Endothelial cell of umbilical vein (primary cell): ENCODE measurements at regions of chr14 and their contacts with region 1.

Region 1: DNA sequence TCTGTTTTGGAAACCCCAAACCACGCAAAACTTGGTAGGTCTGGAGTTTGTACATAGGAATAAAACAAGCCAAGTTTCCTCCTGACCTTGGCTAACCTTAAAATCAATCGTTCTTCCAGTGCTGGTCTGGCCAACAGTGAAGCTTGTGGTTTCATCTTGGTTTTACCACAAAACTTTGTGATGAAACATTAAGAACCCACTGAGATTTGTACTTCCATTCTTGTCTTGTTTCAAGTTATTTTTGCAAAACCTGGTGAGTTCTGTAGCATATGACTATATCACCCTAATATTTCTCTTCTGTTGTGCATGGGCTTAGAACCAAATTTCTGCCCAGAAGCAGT is 26.4 kb downstream of the SIX1 start:
- DNase-seq: no peak
- H3K4me3 ChIP-seq: no peak overlapping the region
- H3K27ac ChIP-seq: no peak overlapping the region
- H3K4me1 ChIP-seq: peaks cover 10% of the 10 kb centered on the region
- H3K27me3 ChIP-seq: peaks cover 0 to 2% of the 10 kb centered on the region in 2 experiments
- CTCF ChIP-seq: no peak
- POLR2A ChIP-seq: no peak

Region 2: GRCh38 chr14:60724137-60724619 is 101.3 kb after region 1 on chr14 and contains the start of gene SIX4:
- CTCF ChIA-PET with region 1: interaction called, 14 read pairs
- POLR2A ChIA-PET with region 1: interaction called, 4 read pairs
- dilution Hi-C with region 1: no loop called
- intact Hi-C with region 1: loop called (anchors 2 kb)
- DNase-seq: peak; percentile 85
- H3K4me3 ChIP-seq: peak within 1 kb of the TSS; percentile 81 to 94 (median 86)
- H3K27ac ChIP-seq: peak within 1 kb of the TSS; percentile 57
- H3K4me1 ChIP-seq: peaks cover 8% of the 10 kb centered on the region
- H3K27me3 ChIP-seq: peaks cover 9 to 16% of the 10 kb centered on the region in 2 experiments
- CTCF ChIP-seq: no peak
- POLR2A ChIP-seq: peak; percentile 75
- total RNA-seq, gene SIX4: 4.7 and 7.5 TPM in 2 replicates

Region 3: GRCh38 chr14:60753264-60754119 is 130.6 kb after region 1 on chr14:
- CTCF ChIA-PET with region 1: no interaction called
- POLR2A ChIA-PET with region 1: no interaction called
- dilution Hi-C with region 1: no loop called
- intact Hi-C with region 1: no loop called
- DNase-seq: no peak
- H3K4me3 ChIP-seq: no peak overlapping the region
- H3K27ac ChIP-seq: no peak overlapping the region
- H3K4me1 ChIP-seq: peaks cover 18% of the 10 kb centered on the region
- H3K27me3 ChIP-seq: no peaks in the 10 kb centered on the region
- CTCF ChIP-seq: no peak
- POLR2A ChIP-seq: no peak

Region 4: DNA sequence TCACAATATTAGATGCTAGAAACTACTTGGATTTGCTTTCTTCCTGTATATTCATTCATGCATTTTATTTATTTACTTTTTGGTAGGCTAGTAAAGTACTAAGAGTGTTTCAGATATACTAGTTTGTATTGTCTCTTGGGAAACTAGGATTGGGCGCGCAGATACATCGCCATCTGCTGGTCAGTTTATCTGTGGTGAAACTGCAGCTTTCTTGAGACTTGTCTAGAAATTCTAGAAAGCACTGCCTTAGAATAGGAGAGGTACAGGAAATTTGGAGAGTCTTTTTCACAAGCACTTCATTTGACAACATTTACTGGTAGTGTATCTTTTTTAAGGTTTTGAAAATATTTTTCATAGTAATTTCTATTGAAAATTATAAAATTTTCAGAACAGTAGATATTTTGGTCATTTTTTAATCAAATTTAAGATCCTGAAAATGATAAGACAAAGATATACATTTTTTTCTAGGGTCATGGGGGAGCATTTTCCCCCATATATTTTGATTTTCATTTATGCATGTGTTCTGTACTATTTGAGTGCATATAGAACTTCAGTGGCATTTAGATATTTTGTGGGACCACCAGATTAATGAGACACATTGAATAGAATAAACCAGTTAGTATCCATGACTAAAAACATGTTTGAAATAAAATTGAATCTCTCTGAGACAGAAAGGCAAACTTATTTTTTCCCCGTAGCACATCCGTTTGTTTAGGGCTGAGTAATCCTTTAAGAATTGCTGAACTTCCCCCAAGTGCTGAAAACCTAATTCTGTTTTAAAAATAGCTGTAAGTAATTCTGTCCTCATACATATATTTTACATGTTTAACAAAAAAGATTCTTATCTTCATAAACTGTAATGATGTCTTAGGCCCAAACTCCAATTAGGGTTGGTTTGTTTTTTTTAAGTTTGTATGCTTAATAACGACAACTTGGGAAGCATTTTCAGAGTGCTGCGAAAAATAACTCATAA is 402.6 kb after region 1 on chr14:
- CTCF ChIA-PET with region 1: interaction called, 25 read pairs
- POLR2A ChIA-PET with region 1: no interaction called
- dilution Hi-C with region 1: loop called (anchors 25 kb)
- intact Hi-C with region 1: loop called (anchors 1 kb)
- DNase-seq: peak; percentile 80
- H3K4me3 ChIP-seq: peak overlapping the region in 1 of 3 experiments; percentile 46
- H3K27ac ChIP-seq: peak overlapping the region; percentile 89
- H3K4me1 ChIP-seq: peaks cover 21% of the 10 kb centered on the region
- H3K27me3 ChIP-seq: no peaks in the 10 kb centered on the region
- CTCF ChIP-seq: peak; percentile 66 to 68
- POLR2A ChIP-seq: no peak

Region 5: DNA sequence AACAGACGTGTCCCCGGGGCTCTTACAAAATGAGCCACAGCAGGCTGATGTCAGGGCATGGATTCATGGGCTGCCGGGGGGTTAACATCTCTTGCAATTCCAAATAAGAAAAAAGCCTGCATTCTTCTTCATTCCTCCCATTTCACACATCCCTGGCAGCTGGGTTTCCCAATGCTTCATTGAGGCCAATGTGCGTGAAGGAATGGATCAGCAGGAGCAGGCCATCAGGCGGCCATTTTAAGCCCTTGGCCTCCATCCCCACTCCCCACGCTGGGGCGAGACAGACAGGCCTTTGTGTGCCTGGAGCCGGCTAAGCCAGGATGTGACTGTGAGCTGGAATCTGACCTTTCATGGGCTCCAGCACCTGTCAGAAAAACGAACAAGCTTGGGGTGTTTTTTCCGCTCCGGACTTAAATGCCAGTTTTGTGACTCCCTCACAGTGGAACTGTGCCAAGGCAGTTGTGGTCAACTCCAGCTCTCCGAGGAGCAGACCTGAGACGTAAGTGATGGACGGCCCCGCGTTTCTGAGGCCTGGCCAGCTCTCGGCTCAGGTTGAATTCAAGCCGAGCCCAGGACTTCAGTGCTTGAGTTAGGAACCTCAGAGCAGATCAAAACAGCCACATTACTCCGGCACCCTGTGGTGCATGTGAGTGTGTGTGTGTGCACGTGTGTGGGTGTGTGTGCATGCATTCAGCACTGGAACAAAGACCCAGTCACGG is 525.1 kb after region 1 on chr14:
- CTCF ChIA-PET with region 1: interaction called, 4 read pairs
- POLR2A ChIA-PET with region 1: no interaction called
- dilution Hi-C with region 1: no loop called
- intact Hi-C with region 1: loop called (anchors 1 kb)
- DNase-seq: peak; percentile 85
- H3K4me3 ChIP-seq: no peak overlapping the region
- H3K27ac ChIP-seq: peak overlapping the region; percentile 84
- H3K4me1 ChIP-seq: peaks cover 28% of the 10 kb centered on the region
- H3K27me3 ChIP-seq: no peaks in the 10 kb centered on the region
- CTCF ChIP-seq: no peak
- POLR2A ChIP-seq: no peak

Region 6: DNA sequence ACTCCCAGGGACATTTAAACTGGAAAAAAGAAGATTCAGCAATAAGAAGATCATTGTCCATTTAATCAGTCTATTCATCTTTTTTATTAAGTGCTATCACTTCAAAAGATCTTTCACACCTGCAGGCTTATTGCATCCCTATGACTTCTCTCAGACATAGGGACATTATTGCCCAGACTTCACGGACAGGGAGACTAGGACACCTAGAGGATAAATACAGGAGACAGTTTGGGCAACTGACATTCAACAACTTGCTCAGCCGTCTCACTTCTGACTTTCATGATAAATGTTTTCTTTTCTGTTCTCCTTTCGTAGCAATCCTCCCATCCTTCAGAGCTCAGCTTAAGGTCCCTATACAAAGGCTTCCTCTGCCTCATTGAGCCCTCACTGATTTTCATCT is 573.9 kb after region 1 on chr14:
- CTCF ChIA-PET with region 1: interaction called, 7 read pairs
- POLR2A ChIA-PET with region 1: no interaction called
- dilution Hi-C with region 1: no loop called
- intact Hi-C with region 1: loop called (anchors 1 kb)
- DNase-seq: no peak
- H3K4me3 ChIP-seq: no peak overlapping the region
- H3K27ac ChIP-seq: no peak overlapping the region
- H3K4me1 ChIP-seq: no peaks in the 10 kb centered on the region
- H3K27me3 ChIP-seq: no peaks in the 10 kb centered on the region
- CTCF ChIP-seq: peak in 1 of 2 donors; percentile 19
- POLR2A ChIP-seq: no peak

Region 7: GRCh38 chr14:61287196-61287595 is 664.3 kb after region 1 on chr14:
- CTCF ChIA-PET with region 1: interaction called, 18 read pairs
- POLR2A ChIA-PET with region 1: no interaction called
- dilution Hi-C with region 1: no loop called
- intact Hi-C with region 1: loop called (anchors 1 kb)
- DNase-seq: no peak
- H3K4me3 ChIP-seq: no peak overlapping the region
- H3K27ac ChIP-seq: no peak overlapping the region
- H3K4me1 ChIP-seq: peaks cover 10% of the 10 kb centered on the region
- H3K27me3 ChIP-seq: no peaks in the 10 kb centered on the region
- CTCF ChIP-seq: no peak
- POLR2A ChIP-seq: no peak